Activated T-helper 2 cell treated with anti-CD3 and anti-CD28 coated beads, Interferon-gamma antibody, Interleukin-2, Interleukin-4, amounts not matched to agents 10 μg/mL and 5 μg/mL and 100 μg/mL, durations not matched to agents 14 hours and 24 hours and 36 hours (primary cell): ENCODE measurements at regions of chr15 and their contacts with region 1.

Region 1: DNA sequence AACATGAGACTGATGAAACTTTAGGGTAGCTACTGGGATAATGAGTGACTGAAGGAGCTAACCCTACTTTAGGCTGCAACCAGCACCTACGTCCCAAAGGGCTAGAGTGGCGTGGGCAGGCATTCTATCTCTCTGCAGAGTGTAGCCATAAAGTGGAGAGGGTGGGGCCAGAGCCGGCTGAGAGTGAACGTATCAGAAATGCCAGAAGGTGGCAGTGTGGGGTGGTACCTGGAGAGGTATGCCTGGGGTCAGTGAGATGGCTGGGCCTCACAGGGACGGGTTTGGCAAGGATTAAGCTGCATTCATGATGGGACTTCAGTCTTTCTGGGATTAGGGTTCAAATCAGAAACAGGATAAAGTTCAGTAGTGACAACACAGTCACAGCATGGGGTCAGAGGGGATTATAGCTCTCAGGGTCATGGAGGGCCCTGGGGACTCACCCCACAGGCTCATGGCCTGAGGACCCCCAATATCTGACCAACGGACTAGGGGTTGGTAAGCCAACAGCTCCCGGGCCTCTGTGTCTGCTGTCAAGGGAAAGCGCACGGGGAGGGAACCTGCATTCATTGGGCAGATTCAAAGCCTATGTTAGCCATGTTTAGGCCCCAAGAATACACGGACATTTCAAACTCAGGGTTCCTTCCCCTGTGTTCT is 86.5 kb upstream of the FOXB1 start:
- DNase-seq: peak; percentile 67
- H3K4me3 Mint-ChIP-seq: no peak overlapping the region
- H3K27ac Mint-ChIP-seq: peak overlapping the region; percentile 46
- H3K4me1 Mint-ChIP-seq: peaks cover 27% of the 10 kb centered on the region
- H3K27me3 Mint-ChIP-seq: peaks cover 23% of the 10 kb centered on the region

Region 2: GRCh38 chr15:59725172-59725486 is 192.5 kb before region 1 on chr15:
- intact Hi-C with region 1: loop called (anchors 10 kb)
- DNase-seq: no peak
- H3K4me3 Mint-ChIP-seq: no peak overlapping the region
- H3K27ac Mint-ChIP-seq: no peak overlapping the region
- H3K4me1 Mint-ChIP-seq: peaks cover 2% of the 10 kb centered on the region
- H3K27me3 Mint-ChIP-seq: peaks cover 20% of the 10 kb centered on the region

Region 3: DNA sequence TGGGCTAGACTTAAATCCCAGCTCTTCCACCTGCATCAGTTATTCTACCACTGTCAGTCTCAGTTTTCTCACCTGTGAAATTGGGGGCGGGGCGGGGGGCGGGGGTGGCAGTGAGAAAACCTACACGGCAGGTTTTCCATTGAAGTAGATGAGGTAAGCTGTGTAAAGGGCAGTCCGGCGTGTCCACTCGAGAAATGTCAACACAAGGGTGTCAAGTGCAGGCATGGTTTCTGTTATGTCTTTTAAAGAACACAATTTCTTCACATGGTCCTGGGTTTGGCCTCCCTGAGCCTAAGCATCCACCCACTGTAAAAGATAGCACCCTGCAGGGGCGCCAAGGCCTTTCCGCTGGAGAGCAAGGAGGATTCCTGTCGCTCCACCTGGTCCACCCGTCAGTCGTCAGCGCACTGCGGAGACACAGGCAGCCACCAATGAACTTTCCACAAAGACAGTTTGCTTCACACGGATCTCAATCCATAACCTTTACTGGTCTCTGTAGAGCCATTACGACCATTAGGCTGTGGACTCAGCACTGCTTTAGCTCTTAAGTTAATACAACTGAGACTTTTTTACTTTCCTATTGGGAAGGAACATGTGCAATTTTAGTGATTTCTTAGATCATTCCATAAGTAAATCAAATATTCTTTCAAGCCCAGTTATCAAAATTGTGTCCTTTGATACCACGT is 13.0 kb before region 1 on chr15:
- intact Hi-C with region 1: no loop called
- DNase-seq: no peak
- H3K4me3 Mint-ChIP-seq: no peak overlapping the region
- H3K27ac Mint-ChIP-seq: no peak overlapping the region
- H3K4me1 Mint-ChIP-seq: no peaks in the 10 kb centered on the region
- H3K27me3 Mint-ChIP-seq: peaks cover 54% of the 10 kb centered on the region

Region 4: GRCh38 chr15:59997070-59997701 is 79.6 kb after region 1 on chr15:
- intact Hi-C with region 1: loop called (anchors 1 kb)
- DNase-seq: peak; percentile 70
- H3K4me3 Mint-ChIP-seq: peak overlapping the region; percentile 85
- H3K27ac Mint-ChIP-seq: peak overlapping the region; percentile 86
- H3K4me1 Mint-ChIP-seq: peaks cover 66% of the 10 kb centered on the region
- H3K27me3 Mint-ChIP-seq: peaks cover 89% of the 10 kb centered on the region

Region 5: DNA sequence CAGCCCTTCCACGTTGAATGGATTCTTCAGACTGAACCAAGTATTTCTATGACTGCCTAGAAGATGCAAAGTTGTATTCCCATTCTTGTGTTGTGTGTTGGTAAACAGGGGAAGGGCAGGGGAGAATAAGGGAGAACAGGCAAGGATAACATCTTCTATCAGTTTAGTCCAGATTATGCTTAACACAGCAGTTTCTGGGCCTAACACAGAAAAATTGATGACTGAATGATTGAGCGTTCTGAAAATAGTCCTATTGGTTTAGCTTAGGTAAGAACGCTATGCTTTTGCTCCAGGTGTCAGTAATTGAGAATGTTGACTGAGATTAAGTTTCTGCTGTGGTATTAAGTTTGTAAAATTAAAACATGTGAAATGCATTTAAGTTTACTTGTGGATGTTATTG is 95.1 kb after region 1 on chr15:
- intact Hi-C with region 1: no loop called
- DNase-seq: no peak
- H3K4me3 Mint-ChIP-seq: no peak overlapping the region
- H3K27ac Mint-ChIP-seq: no peak overlapping the region
- H3K4me1 Mint-ChIP-seq: peaks cover 22% of the 10 kb centered on the region
- H3K27me3 Mint-ChIP-seq: peaks cover 59% of the 10 kb centered on the region

Region 6: DNA sequence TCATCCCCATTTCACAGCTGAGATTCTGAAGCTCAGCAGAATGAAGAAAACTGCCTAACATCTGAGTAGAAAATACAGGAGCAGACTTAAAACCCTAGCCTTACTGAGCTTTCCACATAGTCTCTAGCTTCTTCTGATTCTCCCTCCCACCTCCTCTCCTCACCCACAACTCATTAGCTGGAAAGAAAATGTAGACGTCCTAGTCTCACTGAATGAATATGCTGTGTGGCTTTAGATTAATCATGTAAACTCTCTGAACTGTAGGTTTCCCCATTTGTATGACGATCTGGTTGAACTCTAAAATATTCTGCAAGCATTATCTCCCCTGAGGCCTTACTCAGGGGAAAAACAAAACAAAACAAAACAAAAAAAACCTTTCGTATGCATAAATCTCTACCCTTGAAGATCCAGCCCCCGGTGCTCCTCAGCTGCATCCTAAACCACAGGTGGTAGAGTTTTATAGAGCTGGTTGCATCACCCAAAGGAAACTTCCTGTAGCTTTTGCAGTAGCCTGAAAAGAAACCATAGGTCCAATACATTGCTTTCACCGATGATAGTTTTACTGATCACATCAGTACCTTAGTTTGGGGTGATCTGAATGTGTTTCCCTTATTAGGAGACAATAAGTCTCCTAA is 127.1 kb after region 1 on chr15:
- intact Hi-C with region 1: loop called (anchors 1 kb)
- DNase-seq: peak; percentile 33
- H3K4me3 Mint-ChIP-seq: peak overlapping the region; percentile 13
- H3K27ac Mint-ChIP-seq: peak overlapping the region; percentile 77
- H3K4me1 Mint-ChIP-seq: peaks cover 24% of the 10 kb centered on the region
- H3K27me3 Mint-ChIP-seq: no peaks in the 10 kb centered on the region

Region 7: GRCh38 chr15:60115579-60116380 is 198.1 kb after region 1 on chr15:
- intact Hi-C with region 1: loop called (anchors 5 kb)
- DNase-seq: no peak
- H3K4me3 Mint-ChIP-seq: no peak overlapping the region
- H3K27ac Mint-ChIP-seq: peak overlapping the region; percentile 83
- H3K4me1 Mint-ChIP-seq: peaks cover 53% of the 10 kb centered on the region
- H3K27me3 Mint-ChIP-seq: no peaks in the 10 kb centered on the region

Region 8: GRCh38 chr15:60179786-60180391 is 262.3 kb after region 1 on chr15:
- intact Hi-C with region 1: loop called (anchors 1 kb)
- DNase-seq: no peak
- H3K4me3 Mint-ChIP-seq: no peak overlapping the region
- H3K27ac Mint-ChIP-seq: no peak overlapping the region
- H3K4me1 Mint-ChIP-seq: peaks cover 4% of the 10 kb centered on the region
- H3K27me3 Mint-ChIP-seq: peaks cover 38% of the 10 kb centered on the region

Region 9: DNA sequence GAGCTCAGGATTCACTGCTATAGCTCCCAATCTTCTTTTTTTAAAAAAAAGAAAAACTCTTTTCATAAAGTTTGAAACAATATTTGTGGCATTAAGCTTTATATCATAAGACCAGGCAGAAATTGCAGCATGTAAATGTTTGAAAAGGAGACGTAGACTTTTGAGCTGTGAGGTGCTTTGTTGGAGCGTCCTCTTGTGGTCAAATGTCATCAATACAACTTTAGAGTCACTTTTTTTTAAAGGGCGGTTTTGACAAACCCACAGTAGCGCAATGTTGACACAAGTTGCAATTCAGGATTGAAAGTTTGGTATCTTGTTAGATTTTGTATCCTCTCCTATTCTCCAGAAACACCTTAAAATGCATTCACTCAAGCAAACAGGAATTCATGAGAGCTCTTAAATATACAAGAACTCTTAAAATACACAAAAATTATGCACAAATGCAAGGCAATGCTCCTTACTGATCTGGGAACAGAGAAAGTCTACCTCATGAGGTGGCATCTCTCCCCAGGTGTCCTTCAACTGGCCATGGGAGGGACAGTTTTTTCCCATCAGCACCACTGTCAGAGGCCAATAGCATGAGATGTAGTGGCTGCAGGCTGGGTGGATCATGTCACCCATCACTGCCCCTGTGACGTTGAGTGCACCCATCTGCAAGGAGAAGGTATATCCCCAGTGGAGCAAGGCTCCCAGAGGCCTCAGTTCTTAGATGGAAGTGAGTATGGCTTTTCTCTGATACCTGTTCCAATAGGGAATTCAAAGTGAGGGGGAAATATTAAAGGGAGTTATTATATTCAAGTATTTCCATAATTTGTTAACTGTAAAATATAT is 409.4 kb after region 1 on chr15:
- intact Hi-C with region 1: loop called (anchors 2 kb)
- DNase-seq: no peak
- H3K4me3 Mint-ChIP-seq: no peak overlapping the region
- H3K27ac Mint-ChIP-seq: no peak overlapping the region
- H3K4me1 Mint-ChIP-seq: peaks cover 5% of the 10 kb centered on the region
- H3K27me3 Mint-ChIP-seq: peaks cover 58% of the 10 kb centered on the region